Sciatic nerve (tissue), 2 donors: ENCODE measurements at regions of chr1 and their contacts with region 1.

Region 1: DNA sequence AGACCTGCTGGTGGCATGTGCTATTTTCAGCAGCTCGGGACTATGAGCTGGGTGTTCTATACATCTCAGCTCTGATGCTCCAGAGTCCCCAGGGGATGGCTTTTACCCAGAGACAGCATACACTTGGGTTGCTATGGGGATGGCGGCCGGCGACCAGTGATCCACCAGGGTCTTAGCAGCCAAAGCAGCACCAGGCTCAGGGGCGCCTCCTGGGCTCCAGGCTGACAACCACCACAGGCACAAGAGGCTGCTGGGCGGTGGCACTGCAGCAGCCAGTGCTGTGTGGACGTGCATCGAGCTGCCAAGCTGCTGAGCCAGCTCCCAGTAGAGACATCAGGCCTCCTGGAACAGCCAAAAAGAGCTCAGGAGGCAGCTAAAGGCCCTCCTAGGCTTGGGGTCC is 37.6 kb upstream of the CLSTN1 start:
- DNase-seq: no peak
- ATAC-seq: no peak

Region 2: DNA sequence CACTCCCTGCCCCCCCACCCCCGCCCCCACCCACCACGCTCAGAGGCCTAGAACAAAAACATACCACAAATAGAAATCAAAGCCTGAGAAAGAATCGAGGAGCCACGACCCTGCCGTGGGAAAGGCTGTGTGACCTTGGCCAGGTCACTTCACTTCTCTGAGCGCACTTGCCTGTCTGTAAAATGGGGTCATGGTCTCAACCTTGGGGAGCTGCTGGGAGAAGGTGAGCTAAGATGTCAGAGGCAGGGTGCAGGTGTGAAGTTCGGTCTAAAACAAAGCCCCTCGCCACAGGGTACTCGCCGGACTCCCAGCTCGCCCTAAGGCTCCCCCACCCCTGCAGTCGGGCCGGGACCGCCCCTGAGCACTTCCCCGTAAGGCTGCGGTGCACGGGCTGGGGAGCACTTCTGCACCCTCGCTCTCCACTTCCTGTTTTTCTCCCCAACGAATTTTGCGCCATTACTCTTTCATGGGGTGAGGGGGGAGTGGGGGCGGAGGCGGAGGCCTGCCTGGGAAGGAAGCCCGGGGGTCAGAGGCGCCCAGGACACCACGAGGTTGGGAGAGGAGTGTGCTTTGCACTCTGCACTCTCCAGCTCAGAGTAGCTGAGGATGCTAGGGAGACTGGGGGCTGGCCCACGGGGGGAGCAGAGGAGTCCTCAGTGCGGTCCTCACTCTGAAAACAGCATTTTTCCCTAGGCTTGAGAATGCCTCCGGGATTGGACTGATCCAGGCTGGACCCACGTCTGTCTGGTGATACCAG is 231.7 kb before region 1 on chr1:
- intact Hi-C with region 1: loop called (anchors 5 kb)
- DNase-seq: peak; percentile 71
- ATAC-seq: peak; percentile 72

Region 3: DNA sequence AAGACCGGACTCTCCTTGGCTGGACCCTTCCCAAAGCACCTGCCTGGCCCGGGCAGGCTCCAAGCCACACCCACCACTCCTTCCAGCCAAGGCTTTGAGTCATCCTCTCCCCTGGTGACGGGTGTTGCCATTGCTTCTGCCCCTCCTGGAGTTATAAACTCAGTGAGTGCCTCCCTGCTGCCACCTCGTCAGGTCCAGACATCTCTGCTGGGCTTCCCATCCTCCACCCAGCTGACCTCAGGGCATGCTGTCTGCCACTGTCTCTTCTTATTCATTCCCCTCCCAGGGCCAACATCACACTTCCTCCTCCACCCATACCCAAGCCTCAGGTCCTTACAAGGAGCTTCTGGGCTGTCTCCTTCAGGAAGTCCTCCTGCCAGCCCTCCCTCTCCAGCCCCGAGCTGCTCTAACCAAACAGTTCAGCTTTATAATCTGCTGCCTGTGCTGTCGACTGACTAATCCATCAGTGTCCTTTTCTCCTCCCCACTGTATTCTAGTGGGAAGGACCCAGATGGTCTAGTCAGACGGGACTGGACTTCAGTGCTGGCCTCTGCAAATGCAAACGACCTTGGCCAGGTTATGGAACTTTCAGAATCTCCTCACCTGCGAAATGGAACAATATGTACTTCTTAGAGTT is 35.8 kb before region 1 on chr1:
- intact Hi-C with region 1: loop called (anchors 2 kb)
- DNase-seq: no peak
- ATAC-seq: peak; percentile 52

Region 4: GRCh38 chr1:10295481-10296085 is 434.2 kb after region 1 on chr1:
- intact Hi-C with region 1: no loop called
- DNase-seq: no peak
- ATAC-seq: no peak